Activated CD8-positive, alpha-beta T cell treated with anti-CD3 and anti-CD28 coated beads for 36 hours (primary cell): ENCODE measurements at regions of chr15 and their contacts with region 1.

Region 1: GRCh38 chr15:51750792-51751685 is at the start of gene TMOD2:
- DNase-seq: peak; percentile 55
- ATAC-seq: peak; percentile 89
- H3K4me3 Mint-ChIP-seq: peak within 1 kb of the TSS; percentile 79
- H3K27ac Mint-ChIP-seq: no peak within 1 kb of the TSS
- H3K4me1 Mint-ChIP-seq: peaks cover 23% of the 10 kb centered on the region
- H3K27me3 Mint-ChIP-seq: peaks cover 7% of the 10 kb centered on the region
- CTCF ChIP-seq: no peak
- total RNA-seq, gene TMOD2: 4.8 to 7.0 TPM

Region 2: DNA sequence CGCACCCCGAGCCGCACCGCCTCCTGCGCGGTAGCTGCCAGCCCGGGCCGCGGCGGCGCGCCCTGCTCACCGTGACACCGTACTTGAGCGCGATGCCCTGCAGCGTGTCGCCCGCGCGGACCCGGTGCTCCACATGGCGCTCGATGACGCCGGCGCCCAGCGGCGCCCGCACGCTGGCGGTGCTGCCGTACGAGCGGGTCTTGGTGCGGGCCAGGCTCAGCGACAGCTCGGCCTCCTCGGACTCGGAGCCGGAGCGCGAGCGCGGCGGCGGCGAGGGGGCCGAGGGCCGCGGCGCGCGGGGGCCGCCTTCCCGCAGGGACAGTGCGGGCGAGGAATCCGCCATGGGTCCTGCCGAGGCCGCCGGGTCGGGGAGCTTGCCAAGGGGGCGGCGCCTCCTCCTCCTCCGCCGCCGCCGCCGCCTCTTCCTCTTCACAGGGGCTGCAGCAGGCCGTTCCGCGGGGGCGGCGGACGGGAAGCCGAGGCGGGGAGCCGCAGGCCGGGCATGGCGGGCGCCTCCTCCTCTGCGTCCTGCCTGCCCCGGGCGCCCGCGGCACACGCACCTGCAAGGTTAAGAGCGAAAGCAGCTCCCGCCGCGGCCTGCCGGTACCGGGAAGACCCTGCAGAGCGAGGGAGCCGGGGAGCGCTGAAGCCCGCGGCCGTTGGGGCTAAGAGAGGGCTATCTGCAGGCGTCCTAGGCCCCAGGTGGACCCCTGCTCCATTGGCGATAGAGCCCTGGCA is 13.6 kb before region 1 on chr15 and contains the start of gene LYSMD2:
- CTCF ChIA-PET with region 1: interaction called, 10 read pairs
- POLR2A ChIA-PET with region 1: interaction called, 19 read pairs
- intact Hi-C with region 1: no loop called
- DNase-seq: peak; percentile 81
- ATAC-seq: peak; percentile 57
- H3K4me3 Mint-ChIP-seq: peak within 1 kb of the TSS; percentile 82
- H3K27ac Mint-ChIP-seq: peak within 1 kb of the TSS; percentile 87
- H3K4me1 Mint-ChIP-seq: peaks cover 47% of the 10 kb centered on the region
- H3K27me3 Mint-ChIP-seq: no peaks in the 10 kb centered on the region
- CTCF ChIP-seq: no peak
- total RNA-seq, gene LYSMD2: 18.5 to 19.0 TPM